ENCODE measurements at regions of chr17 and their contacts with region 1.

Region 1: GRCh38 chr17:14351493-14351892 is 50.6 kb downstream of the HS3ST3B1 start:
- DNase-seq: no peak
- H3K4me3 ChIP-seq: no peak overlapping the region
- H3K27ac ChIP-seq: no peak overlapping the region
- H3K4me1 ChIP-seq: peaks cover 3% of the 10 kb centered on the region
- H3K27me3 ChIP-seq: no peaks in the 10 kb centered on the region
- CTCF ChIP-seq: no peak
- EP300 ChIP-seq: no peak
- POLR2A ChIP-seq: no peak

Region 2: GRCh38 chr17:14268264-14268663 is 83.2 kb before region 1 on chr17:
- intact Hi-C with region 1: no loop called
- DNase-seq: no peak
- H3K4me3 ChIP-seq: no peak overlapping the region
- H3K27ac ChIP-seq: no peak overlapping the region
- H3K4me1 ChIP-seq: no peaks in the 10 kb centered on the region
- H3K27me3 ChIP-seq: no peaks in the 10 kb centered on the region
- CTCF ChIP-seq: no peak
- EP300 ChIP-seq: no peak
- POLR2A ChIP-seq: no peak

Region 3: GRCh38 chr17:14393723-14394122 is 42.2 kb after region 1 on chr17:
- intact Hi-C with region 1: loop called in 1 of 4 experiments (anchors 1 kb)
- DNase-seq: no peak
- H3K4me3 ChIP-seq: no peak overlapping the region
- H3K27ac ChIP-seq: no peak overlapping the region
- H3K4me1 ChIP-seq: no peaks in the 10 kb centered on the region
- H3K27me3 ChIP-seq: no peaks in the 10 kb centered on the region
- CTCF ChIP-seq: no peak
- EP300 ChIP-seq: no peak
- POLR2A ChIP-seq: no peak

Measured in ovary (tissue), 10 donors.